Naive thymus-derived CD8-positive, alpha-beta T cell (primary cell): ENCODE measurements at regions of chr1 and their contacts with region 1.

Region 1: DNA sequence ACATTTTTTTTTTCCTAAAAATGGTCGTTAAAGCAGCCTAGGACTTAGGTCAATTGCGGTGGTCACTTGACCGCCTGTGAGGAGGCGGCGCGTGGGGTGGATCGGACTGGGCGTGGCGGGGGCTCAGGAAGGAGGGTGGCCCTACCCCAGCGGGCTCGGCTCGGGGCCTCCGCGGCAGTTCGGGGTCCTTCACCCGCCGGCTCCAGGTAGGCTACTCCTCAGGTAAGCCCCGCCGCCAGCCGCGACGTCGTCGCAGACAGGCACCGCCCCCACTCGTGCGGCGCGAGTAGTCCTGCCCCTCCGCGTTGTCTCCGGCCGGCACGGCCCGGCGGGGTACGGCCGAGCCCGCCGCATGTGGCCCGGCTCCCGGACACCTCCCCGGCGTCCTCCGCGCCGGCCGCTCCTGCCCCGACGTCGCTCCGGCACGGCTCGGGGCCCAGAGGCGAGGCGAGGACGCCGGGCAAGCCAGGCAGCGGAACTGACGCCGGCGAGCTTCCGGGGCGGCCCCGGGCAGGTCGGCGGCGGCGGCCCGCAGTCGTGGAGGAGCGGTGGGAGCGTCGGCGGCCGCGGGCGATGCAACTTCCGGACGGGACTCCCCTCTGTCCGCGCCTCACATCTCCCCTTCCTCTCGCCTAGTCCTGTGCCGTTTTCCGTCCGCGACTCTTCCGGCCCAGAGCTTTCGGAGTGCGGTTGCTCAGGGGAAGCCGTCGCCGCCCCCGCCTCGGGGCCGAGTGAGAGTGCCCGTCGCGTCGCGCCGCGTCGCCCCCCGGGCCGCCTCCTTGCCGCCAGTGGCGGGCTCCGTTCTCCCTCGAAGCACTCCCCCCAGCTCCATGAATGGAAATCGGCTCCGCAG is at the start of gene AGO3:
- DNase-seq: peak; percentile 80 to 91 (median 84)
- ATAC-seq: peak; percentile 82 to 83
- H3K4me3 Mint-ChIP-seq: peak within 1 kb of the TSS; percentile 86 to 97 (median 92)
- H3K27ac Mint-ChIP-seq: peak within 1 kb of the TSS; percentile 94 to 99 (median 98)
- H3K4me1 Mint-ChIP-seq: peaks cover 6 to 40% (median 33%) of the 10 kb centered on the region in 4 donors
- H3K27me3 Mint-ChIP-seq: no peaks in the 10 kb centered on the region
- polyA plus RNA-seq, gene AGO3: 5.7 to 16.8 (median 8.6) TPM

Region 2: GRCh38 chr1:35882945-35883634 is 47.7 kb before region 1 on chr1 and contains the start of gene AGO1:
- POLR2A ChIA-PET with region 1: interaction called, 34 read pairs
- DNase-seq: peak; percentile 93 to 99 (median 98)
- ATAC-seq: peak; percentile 94
- H3K4me3 Mint-ChIP-seq: peak within 1 kb of the TSS; percentile 91 to 99 (median 93)
- H3K27ac Mint-ChIP-seq: peak within 1 kb of the TSS; percentile 53 to 93 (median 90)
- H3K4me1 Mint-ChIP-seq: peaks cover 29 to 58% (median 52%) of the 10 kb centered on the region in 4 donors
- H3K27me3 Mint-ChIP-seq: no peaks in the 10 kb centered on the region
- polyA plus RNA-seq, gene AGO1: 6.1 to 9.9 (median 7.9) TPM

Region 3: GRCh38 chr1:35915693-35916092 is 15.1 kb before region 1 on chr1:
- POLR2A ChIA-PET with region 1: no interaction called
- DNase-seq: no peak
- ATAC-seq: no peak
- H3K4me3 Mint-ChIP-seq: no peak overlapping the region
- H3K27ac Mint-ChIP-seq: no peak overlapping the region
- H3K4me1 Mint-ChIP-seq: peaks cover 0 to 1% (median 0%) of the 10 kb centered on the region in 4 donors
- H3K27me3 Mint-ChIP-seq: no peaks in the 10 kb centered on the region

Region 4: DNA sequence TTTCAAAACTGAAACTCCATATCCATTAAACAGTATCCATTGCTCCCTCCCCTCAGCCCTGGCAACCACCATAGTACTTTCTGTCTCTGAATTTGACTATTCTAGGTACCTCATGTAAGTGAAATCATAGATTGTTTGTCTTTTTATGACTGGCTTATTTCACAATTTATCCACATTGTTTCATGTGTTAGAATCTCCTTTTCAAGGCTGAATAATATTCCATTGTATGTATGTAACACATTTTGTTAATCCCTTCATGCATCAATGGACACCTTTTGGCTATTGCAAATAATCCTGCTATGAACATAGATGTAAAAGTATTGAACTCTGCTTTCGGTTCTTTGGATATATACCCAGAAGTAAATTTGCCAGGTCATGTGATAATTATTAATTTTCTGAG is 37.6 kb after region 1 on chr1:
- POLR2A ChIA-PET with region 1: no interaction called
- DNase-seq: no peak
- ATAC-seq: no peak
- H3K4me3 Mint-ChIP-seq: no peak overlapping the region
- H3K27ac Mint-ChIP-seq: no peak overlapping the region
- H3K4me1 Mint-ChIP-seq: peaks cover 4 to 7% (median 5%) of the 10 kb centered on the region in 4 donors
- H3K27me3 Mint-ChIP-seq: no peaks in the 10 kb centered on the region